Cardiac septum (tissue), 1 donor: ENCODE measurements at regions of chr12 and their contacts with region 1.

Region 1: GRCh38 chr12:118372541-118373495 is at the start of gene TAOK3:
- DNase-seq: peak; percentile 99
- total RNA-seq, gene TAOK3: 21.7 TPM

Region 2: DNA sequence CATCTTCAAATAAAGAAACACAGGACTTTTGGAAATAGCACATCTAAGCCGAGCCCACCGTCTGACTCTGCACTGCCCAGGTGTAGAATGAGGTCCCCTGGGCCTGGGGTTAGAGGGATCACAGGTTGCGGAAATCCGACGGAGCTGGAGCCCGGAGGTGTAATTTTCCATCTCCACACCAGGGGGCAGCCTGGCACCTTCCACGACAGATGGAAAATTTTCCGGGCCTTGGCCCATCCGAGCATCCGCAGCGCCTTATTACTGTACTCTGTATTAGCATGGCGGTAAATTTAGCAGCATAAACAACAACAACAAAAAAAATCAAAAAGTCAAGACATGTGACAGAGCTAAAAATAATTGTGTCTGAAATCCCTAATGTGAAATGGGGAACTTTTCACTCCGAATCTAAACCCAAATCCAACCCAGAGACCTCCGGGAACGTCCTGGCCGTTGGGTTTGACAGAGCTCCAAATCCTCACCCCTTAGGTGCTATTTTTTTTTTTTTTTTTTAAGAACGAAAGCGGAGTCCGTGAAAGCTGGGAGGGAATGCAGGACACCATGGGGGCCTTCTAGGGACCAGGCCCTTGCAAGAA is 497.9 kb before region 1 on chr12:
- intact Hi-C with region 1: loop called (anchors 10 kb)
- DNase-seq: no peak

Region 3: GRCh38 chr12:118061011-118061875 is 311.6 kb before region 1 on chr12 and contains the start of gene WSB2:
- intact Hi-C with region 1: loop called (anchors 5 kb)
- DNase-seq: peak; percentile 93
- total RNA-seq, gene WSB2: 95.3 TPM

Region 4: GRCh38 chr12:118135788-118136558 is 236.8 kb before region 1 on chr12 and contains the start of gene PEBP1:
- intact Hi-C with region 1: loop called (anchors 5 kb)
- DNase-seq: peak; percentile 97
- total RNA-seq, gene PEBP1: 344 TPM

Region 5: DNA sequence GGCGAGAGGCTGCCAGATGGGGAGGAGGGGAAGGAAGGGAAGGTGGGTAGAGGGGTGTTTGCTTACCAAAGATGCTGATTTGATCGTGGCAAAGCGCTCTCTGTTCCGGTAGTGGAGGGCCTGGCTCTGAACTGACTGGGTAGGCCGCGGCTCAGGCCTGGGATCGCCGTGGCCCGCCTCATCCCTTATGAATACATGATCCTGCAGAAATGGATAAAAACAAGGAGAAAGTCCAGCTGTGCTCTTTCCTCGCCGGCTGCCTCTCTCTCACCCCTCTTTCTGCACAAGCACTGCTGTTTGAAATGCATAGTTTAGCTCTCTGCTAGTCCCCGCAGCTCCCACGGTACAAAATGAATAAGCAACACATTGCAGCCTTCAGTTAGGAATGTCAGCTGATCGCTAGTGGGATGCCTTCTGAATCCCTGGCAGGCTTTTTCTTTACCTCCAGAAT is 183.1 kb before region 1 on chr12:
- intact Hi-C with region 1: loop called (anchors 2 kb)
- DNase-seq: no peak

Region 6: GRCh38 chr12:118397708-118398440 is 25.1 kb after region 1 on chr12:
- intact Hi-C with region 1: no loop called
- DNase-seq: no peak